T-cell (primary cell): ENCODE measurements at regions of chr10 and their contacts with region 1.

Region 1: DNA sequence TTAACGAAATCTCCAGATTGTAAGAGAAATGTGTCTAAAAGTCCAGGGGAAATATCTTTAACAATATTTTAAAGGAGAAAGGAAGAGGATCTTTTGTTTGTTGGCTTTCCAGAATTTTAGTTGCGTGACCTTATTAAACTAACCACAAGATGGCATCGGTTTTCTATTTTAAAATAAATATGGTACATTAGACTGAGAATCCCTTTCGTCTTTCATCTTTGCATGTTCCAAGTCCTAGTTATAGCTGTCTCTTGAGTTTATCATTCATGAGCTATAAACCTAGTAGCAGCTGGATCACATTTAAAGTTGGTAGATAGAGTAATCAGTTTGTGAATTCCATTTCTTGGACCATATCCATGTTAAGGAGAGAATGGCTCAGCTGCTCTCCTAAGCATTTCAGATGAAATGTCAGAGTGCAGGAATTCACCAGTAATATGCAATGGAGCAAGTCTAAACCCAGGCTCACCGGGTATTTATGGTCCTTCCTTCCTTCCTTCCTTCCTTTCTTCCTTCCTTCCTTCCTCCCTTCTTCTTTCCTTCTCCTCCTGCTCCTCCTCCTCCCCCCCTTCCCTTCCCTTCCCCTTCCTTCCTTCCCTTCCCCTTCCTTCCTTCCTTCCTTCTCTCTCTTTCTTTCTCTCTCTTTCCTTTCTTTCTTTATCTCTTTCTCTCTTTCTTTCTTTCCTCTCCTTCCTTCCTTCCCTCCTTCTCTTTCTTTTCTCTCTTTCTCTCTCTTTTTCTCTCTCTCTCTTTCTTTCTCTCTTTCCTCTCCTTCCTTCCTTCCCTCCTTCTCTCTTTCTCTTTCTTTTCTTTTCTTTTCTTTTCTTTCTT is 57.8 kb upstream of the RAB18 start:
- DNase-seq: peak in 1 of 35 experiments; percentile 57
- ATAC-seq: peak; percentile 40 to 66 (median 60)
- H3K4me3 ChIP-seq: no peak overlapping the region
- H3K4me3 Mint-ChIP-seq: peak overlapping the region in 1 of 3 donors; percentile 32
- H3K27ac ChIP-seq: no peak overlapping the region
- H3K27ac Mint-ChIP-seq: no peak overlapping the region
- H3K4me1 ChIP-seq: peaks cover 3 to 4% of the 10 kb centered on the region in 2 experiments
- H3K4me1 Mint-ChIP-seq: peaks cover 14 to 20% (median 17%) of the 10 kb centered on the region in 3 donors
- H3K27me3 ChIP-seq: no peaks in the 10 kb centered on the region
- H3K27me3 Mint-ChIP-seq: no peaks in the 10 kb centered on the region

Region 2: DNA sequence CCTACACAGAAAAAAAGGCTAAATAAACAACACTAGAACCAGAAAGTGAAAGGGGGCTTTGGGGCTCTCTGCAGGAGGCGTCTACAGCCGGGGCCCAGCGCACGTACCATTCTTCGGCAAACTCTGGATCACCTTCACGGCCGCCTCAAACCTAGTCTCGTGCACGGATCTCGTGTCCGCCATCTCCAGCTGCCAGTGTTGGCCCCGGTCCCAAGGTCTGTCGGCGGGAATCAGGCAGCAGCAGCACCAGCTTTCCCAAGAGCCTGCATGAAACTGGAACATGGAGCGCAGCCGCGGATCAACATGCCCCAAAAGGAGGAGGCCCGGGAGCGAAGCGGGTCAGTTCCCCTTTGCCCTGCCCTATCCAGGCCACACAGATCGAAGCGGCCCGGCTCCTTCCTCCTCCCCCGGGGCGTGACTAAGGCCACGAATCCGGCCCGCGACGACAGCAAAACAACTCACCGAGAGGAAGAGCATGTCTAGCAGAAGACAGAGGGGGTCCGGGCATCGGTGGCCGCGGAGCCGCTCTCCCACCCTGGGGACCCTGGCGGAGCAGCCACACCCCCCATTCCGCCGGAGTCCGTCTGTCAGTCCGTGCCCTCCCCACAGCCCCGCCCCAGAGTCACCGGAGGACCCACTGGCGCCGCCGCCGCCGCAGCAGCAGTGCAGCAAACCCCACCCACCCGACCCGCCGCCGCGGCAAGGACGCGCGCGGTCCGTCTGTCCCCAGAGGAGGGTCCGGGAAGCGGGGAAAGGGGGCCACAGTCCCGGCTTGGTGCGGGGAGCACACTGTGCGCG is 205.9 kb before region 1 on chr10 and contains the start of gene ACBD5:
- CTCF ChIA-PET with region 1: no interaction called
- POLR2A ChIA-PET with region 1: no interaction called
- DNase-seq: peak in 33 of 35 experiments; percentile 25 to 70 (median 51)
- ATAC-seq: peak; percentile 47 to 62 (median 58)
- H3K4me3 ChIP-seq: peak within 1 kb of the TSS; percentile 96
- H3K4me3 Mint-ChIP-seq: peak within 1 kb of the TSS; percentile 93 to 98 (median 98)
- H3K27ac ChIP-seq: peak within 1 kb of the TSS; percentile 97
- H3K27ac Mint-ChIP-seq: peak within 1 kb of the TSS; percentile 97 to 99
- H3K4me1 ChIP-seq: peaks cover 15 to 41% of the 10 kb centered on the region in 2 experiments
- H3K4me1 Mint-ChIP-seq: peaks cover 39 to 43% (median 40%) of the 10 kb centered on the region in 3 donors
- H3K27me3 ChIP-seq: no peaks in the 10 kb centered on the region
- H3K27me3 Mint-ChIP-seq: no peaks in the 10 kb centered on the region
- total RNA-seq, gene ACBD5: 20.7 to 21.2 (median 21.1) TPM

Region 3: GRCh38 chr10:27490807-27491206 is 44.5 kb after region 1 on chr10:
- CTCF ChIA-PET with region 1: no interaction called
- POLR2A ChIA-PET with region 1: no interaction called
- DNase-seq: no peak
- ATAC-seq: no peak
- H3K4me3 ChIP-seq: no peak overlapping the region
- H3K4me3 Mint-ChIP-seq: no peak overlapping the region
- H3K27ac ChIP-seq: no peak overlapping the region
- H3K27ac Mint-ChIP-seq: no peak overlapping the region
- H3K4me1 ChIP-seq: no peaks in the 10 kb centered on the region
- H3K4me1 Mint-ChIP-seq: no peaks in the 10 kb centered on the region
- H3K27me3 ChIP-seq: peaks cover 0 to 4% of the 10 kb centered on the region in 2 experiments
- H3K27me3 Mint-ChIP-seq: peaks cover 10 to 41% of the 10 kb centered on the region in 2 donors

Region 4: DNA sequence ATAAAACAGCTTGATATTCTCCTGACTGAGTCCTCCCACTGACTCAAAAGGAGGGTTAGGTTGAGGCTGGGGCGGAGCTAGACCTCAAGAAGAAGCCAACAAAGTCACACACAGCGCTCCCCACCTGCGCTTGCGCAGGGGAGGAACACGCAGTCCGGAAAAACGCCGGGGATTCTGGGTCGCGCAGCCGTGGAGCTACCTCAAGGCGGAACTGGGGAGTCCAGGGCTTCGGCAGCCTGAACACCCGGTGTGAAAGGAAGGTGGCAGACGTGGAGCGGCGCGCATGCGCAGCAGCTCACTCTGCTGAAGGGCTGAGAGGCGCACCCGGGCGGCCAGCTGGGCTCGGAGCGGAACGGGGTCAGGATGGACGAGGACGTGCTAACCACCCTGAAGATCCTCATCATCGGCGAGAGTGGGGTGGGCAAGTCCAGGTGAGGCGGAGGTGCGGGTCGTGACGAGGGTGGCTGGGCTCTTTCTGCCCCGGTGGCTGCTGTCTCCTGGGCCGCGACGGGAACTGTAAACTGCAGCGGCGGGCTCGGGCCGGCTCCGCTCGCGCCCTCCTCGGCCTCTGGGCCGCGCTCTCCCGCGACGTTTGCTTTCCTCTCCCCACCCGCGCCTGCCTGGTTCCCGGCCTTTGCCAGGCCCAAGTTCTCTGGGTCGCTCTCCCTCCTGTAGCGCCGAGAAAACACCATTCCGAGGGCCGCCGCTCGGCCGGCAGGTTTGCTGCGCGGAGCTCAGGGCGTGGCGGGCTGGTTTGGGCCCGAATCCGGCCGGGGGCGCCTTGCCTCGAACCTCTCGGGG is 57.9 kb after region 1 on chr10 and contains the start of gene RAB18:
- CTCF ChIA-PET with region 1: interaction called, 6 to 28 read pairs
- POLR2A ChIA-PET with region 1: interaction called in 1 of 2 experiments, 3 read pairs
- DNase-seq: peak; percentile 95 to 99 (median 98)
- ATAC-seq: peak; percentile 95 to 96 (median 96)
- H3K4me3 ChIP-seq: peak within 1 kb of the TSS; percentile 73
- H3K4me3 Mint-ChIP-seq: peak within 1 kb of the TSS; percentile 99 to 100 (median 100)
- H3K27ac ChIP-seq: peak within 1 kb of the TSS; percentile 83
- H3K27ac Mint-ChIP-seq: peak within 1 kb of the TSS; percentile 96 to 97
- H3K4me1 ChIP-seq: peaks cover 25 to 35% of the 10 kb centered on the region in 2 experiments
- H3K4me1 Mint-ChIP-seq: peaks cover 53 to 63% (median 54%) of the 10 kb centered on the region in 3 donors
- H3K27me3 ChIP-seq: peaks cover 0 to 1% of the 10 kb centered on the region in 2 experiments
- H3K27me3 Mint-ChIP-seq: no peaks in the 10 kb centered on the region
- total RNA-seq, gene RAB18: 56.5 to 118 (median 69.5) TPM

Region 5: GRCh38 chr10:28241741-28242399 is 795.6 kb after region 1 on chr10:
- CTCF ChIA-PET with region 1: interaction called in 1 of 2 experiments, 10 read pairs
- POLR2A ChIA-PET with region 1: no interaction called
- DNase-seq: peak in 22 of 35 experiments; percentile 3 to 72 (median 22)
- ATAC-seq: peak; percentile 63 to 75 (median 66)
- H3K4me3 ChIP-seq: no peak overlapping the region
- H3K4me3 Mint-ChIP-seq: no peak overlapping the region
- H3K27ac ChIP-seq: no peak overlapping the region
- H3K27ac Mint-ChIP-seq: no peak overlapping the region
- H3K4me1 ChIP-seq: peaks cover 0 to 14% of the 10 kb centered on the region in 2 experiments
- H3K4me1 Mint-ChIP-seq: peaks cover 32 to 42% (median 38%) of the 10 kb centered on the region in 3 donors
- H3K27me3 ChIP-seq: no peaks in the 10 kb centered on the region
- H3K27me3 Mint-ChIP-seq: no peaks in the 10 kb centered on the region